Activated CD4-positive, alpha-beta T cell treated with anti-CD3 and anti-CD28 coated beads, Interleukin-2, amount 10 ng/mL, durations not matched to agents 7 days and 5 days (primary cell): ENCODE measurements at regions of chr12 and their contacts with region 1.

Region 1: DNA sequence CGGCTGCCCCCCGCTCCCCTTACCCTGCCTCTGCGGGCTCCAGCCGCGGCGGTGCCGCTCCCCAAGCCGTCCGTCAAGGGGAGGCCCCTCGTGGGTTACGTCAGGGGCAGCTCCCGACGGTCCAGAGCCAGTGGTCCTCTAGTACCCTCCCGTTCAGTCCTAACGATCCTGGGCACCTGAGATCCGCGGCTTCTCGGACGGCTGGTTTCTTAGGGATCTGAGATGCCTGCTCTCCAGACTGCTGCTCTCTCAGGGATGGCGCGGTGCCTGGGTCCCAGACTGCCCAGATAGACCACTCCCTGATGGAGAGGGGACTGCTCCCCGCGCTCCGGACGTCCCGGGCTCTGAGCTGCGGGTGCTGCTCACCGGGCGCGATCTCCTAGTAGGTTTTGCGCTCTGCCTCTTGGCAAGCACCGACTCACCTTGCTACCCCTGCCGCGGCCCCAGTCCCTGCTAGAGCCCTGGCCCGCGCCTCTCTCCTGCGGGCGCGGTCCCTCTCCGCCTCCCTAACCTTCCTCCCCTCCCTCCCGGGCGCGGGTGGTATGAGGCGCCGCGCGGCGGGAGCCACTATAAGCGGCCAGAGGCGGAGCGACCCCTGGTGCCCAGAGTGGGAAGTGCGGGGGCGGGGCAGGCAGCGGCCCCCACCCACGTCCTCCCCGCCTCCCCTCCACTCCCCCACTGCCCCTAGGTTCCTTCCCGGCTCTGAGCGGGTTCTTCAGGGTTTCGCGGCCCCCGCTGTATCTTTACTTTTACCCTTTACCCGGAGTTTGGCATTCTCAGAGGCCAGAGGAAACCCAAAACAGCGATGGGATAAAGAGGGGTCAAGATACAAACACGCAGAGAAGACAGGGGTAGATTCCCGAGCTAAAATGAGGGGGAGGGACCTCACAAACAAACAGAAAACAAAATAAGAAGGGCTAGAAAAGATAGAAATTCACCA is at the start of gene C1QL4:
- DNase-seq: peak; percentile 86
- H3K4me3 Mint-ChIP-seq: peak within 1 kb of the TSS; percentile 53
- H3K27ac Mint-ChIP-seq: peak within 1 kb of the TSS; percentile 43
- H3K4me1 Mint-ChIP-seq: peaks cover 31% of the 10 kb centered on the region
- H3K27me3 Mint-ChIP-seq: peaks cover 86% of the 10 kb centered on the region
- total RNA-seq, gene C1QL4: not detected

Region 2: GRCh38 chr12:49296034-49296835 is 40.7 kb before region 1 on chr12:
- CTCF ChIA-PET with region 1: interaction called, 32 read pairs
- POLR2A ChIA-PET with region 1: interaction called, 3 read pairs
- DNase-seq: peak; percentile 61
- H3K4me3 Mint-ChIP-seq: peak overlapping the region; percentile 56
- H3K27ac Mint-ChIP-seq: no peak overlapping the region
- H3K4me1 Mint-ChIP-seq: peaks cover 29% of the 10 kb centered on the region
- H3K27me3 Mint-ChIP-seq: peaks cover 53% of the 10 kb centered on the region

Region 3: DNA sequence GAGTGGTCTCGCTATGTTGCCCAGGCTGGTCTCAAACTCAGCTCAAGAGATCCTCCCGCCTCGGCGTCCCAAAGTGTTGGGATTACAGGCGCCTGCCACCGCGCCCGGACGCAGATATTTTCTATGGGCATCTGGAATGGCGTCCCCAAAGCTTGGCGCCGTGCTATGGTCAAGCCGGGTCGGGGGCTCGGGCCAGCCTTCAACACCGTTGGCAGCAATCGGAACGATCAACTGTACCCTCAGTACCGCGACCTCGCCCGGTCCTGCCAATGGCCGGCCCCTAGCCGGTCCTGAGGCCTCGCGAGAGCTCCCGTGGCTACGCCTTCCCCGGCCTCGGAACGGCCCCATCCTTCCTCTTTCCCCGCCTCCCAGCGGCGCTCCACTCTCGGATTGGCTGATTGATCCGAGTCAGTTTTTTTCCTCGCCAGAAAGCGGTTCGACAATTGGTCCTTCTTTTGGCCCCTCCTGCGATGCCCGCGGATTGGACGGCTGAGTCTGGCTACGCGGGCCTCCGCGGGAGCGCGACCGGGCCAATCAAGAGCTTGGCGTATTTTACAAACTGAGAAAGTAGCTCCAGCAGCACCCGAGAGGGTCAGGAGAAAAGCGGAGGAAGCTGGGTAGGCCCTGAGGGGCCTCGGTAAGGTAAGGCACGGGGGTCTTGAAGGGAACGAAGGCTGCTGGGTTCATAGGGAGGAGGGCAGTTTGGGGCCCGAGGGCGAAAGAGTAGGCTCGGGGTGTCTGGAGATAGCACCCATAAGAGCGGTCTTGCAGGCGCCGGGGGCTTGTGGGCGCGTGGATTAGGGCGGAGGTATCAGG is 14.0 kb before region 1 on chr12 and contains the start of gene TROAP:
- CTCF ChIA-PET with region 1: interaction called, 29 read pairs
- POLR2A ChIA-PET with region 1: interaction called, 11 read pairs
- DNase-seq: peak; percentile 99
- H3K4me3 Mint-ChIP-seq: peak within 1 kb of the TSS; percentile 97
- H3K27ac Mint-ChIP-seq: peak within 1 kb of the TSS; percentile 93
- H3K4me1 Mint-ChIP-seq: peaks cover 32% of the 10 kb centered on the region
- H3K27me3 Mint-ChIP-seq: no peaks in the 10 kb centered on the region
- total RNA-seq, gene TROAP: 111 to 115 TPM

Region 4: GRCh38 chr12:49388682-49389386 is 51.9 kb after region 1 on chr12:
- CTCF ChIA-PET with region 1: no interaction called
- POLR2A ChIA-PET with region 1: no interaction called
- DNase-seq: peak; percentile 72
- H3K4me3 Mint-ChIP-seq: no peak overlapping the region
- H3K27ac Mint-ChIP-seq: no peak overlapping the region
- H3K4me1 Mint-ChIP-seq: peaks cover 12% of the 10 kb centered on the region
- H3K27me3 Mint-ChIP-seq: no peaks in the 10 kb centered on the region

Region 5: DNA sequence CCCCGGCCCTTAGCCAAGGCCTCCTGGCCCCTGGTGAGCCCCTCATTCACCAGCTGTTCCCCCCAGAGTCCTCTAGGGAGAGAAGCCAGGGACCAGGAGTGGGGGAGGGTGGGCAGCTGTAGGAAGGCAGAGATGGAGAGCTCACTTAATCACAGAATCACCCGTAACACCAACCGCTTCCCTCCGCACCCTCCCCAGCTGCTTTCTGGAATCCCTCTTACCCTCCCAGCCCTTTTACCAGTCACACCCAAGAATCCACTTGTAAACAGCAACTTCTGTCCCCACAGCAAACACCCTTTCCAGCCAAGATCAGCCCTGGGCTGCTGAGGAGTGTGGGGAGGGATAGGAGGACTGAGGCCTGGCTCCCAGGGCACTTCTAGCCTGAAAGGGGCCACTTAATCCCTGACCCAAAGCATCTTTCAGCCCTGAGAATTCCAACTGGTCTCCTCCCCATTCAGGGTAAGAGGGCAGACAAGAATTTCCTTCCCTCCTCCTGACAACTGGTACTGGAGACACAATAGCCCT is 472.5 kb after region 1 on chr12:
- CTCF ChIA-PET with region 1: no interaction called
- POLR2A ChIA-PET with region 1: no interaction called
- DNase-seq: no peak
- H3K4me3 Mint-ChIP-seq: no peak overlapping the region
- H3K27ac Mint-ChIP-seq: no peak overlapping the region
- H3K4me1 Mint-ChIP-seq: peaks cover 4% of the 10 kb centered on the region
- H3K27me3 Mint-ChIP-seq: no peaks in the 10 kb centered on the region

Region 6: GRCh38 chr12:49933796-49934195 is 596.9 kb after region 1 on chr12:
- CTCF ChIA-PET with region 1: no interaction called
- POLR2A ChIA-PET with region 1: no interaction called
- DNase-seq: no peak
- H3K4me3 Mint-ChIP-seq: no peak overlapping the region
- H3K27ac Mint-ChIP-seq: no peak overlapping the region
- H3K4me1 Mint-ChIP-seq: no peaks in the 10 kb centered on the region
- H3K27me3 Mint-ChIP-seq: peaks cover 4% of the 10 kb centered on the region